ENCODE measurements at regions of chr1 and their contacts with region 1.

Region 1: GRCh38 chr1:7893529-7894180 is 40.8 kb upstream of the UTS2 start:
- DNase-seq: no peak
- ATAC-seq: no peak
- H3K4me3 ChIP-seq: no peak overlapping the region
- H3K27ac ChIP-seq: no peak overlapping the region
- H3K4me1 ChIP-seq: no peaks in the 10 kb centered on the region
- H3K27me3 ChIP-seq: no peaks in the 10 kb centered on the region
- CTCF ChIP-seq: no peak

Region 2: GRCh38 chr1:7827126-7827955 is 66.3 kb before region 1 on chr1:
- CTCF ChIA-PET with region 1: no interaction called
- POLR2A ChIA-PET with region 1: interaction called, 10 read pairs
- in situ Hi-C with region 1: no loop called
- intact Hi-C with region 1: no loop called
- DNase-seq: no peak
- ATAC-seq: no peak
- H3K4me3 ChIP-seq: no peak overlapping the region
- H3K27ac ChIP-seq: no peak overlapping the region
- H3K4me1 ChIP-seq: no peaks in the 10 kb centered on the region
- H3K27me3 ChIP-seq: no peaks in the 10 kb centered on the region
- CTCF ChIP-seq: no peak

Region 3: DNA sequence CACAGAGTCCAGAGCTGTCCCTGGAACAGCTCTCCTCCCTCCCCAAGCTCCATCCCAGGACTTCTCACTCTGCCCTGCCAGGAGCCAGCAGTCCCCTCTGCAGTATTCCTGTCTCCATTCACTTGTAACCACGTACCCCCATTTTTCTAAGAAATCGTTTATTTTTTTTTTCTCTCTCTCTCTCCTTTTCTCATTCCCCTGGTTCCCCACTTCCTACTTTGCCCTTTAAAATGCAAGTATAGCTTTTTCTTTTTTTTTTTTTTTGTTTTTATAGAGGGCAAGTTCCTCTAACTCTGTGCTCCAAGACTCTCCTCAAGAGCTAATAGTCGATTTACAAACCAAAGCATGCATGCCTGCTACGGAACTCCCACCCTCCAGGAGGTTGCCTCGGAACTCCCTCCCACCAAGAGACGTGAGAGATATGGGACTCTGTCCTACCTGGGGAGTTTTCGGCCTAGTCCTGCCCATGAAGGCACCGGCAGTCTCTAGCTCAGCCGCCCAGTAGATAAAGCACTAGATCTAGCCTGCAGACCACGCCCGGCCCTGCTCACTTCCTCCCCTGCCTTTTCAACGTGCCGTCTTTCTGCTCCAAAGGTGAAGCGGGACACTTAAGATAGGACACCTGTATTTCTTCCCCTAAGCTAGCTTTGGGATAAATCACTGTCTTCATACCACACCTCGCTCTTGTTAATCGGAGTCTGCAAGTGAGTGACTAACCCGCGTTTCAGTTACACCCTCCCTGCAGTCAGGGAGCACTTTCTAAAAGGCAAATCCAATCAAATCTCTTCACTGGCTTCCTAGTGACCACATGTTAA is 19.3 kb after region 1 on chr1:
- CTCF ChIA-PET with region 1: interaction called, 10 read pairs
- POLR2A ChIA-PET with region 1: no interaction called
- in situ Hi-C with region 1: no loop called
- intact Hi-C with region 1: no loop called
- DNase-seq: no peak
- ATAC-seq: peak; percentile 70; the same call in 1 of the 2 replicates
- H3K4me3 ChIP-seq: peak overlapping the region in 1 of 2 experiments; percentile 29; a peak in 3 of 4 replicates
- H3K27ac ChIP-seq: no peak overlapping the region
- H3K4me1 ChIP-seq: peaks cover 6% of the 10 kb centered on the region; the same call in 1 of the 2 replicates
- H3K27me3 ChIP-seq: no peaks in the 10 kb centered on the region
- CTCF ChIP-seq: no peak

Region 4: GRCh38 chr1:8343464-8344001 is 449.9 kb after region 1 on chr1:
- CTCF ChIA-PET with region 1: no interaction called
- POLR2A ChIA-PET with region 1: interaction called, 17 read pairs
- in situ Hi-C with region 1: no loop called
- intact Hi-C with region 1: no loop called
- DNase-seq: peak; percentile 81
- ATAC-seq: peak; percentile 84
- H3K4me3 ChIP-seq: peak overlapping the region in 1 of 2 experiments; percentile 24; a peak in 1 of 4 replicates
- H3K27ac ChIP-seq: peak overlapping the region; percentile 90
- H3K4me1 ChIP-seq: peaks cover 26% of the 10 kb centered on the region
- H3K27me3 ChIP-seq: no peaks in the 10 kb centered on the region
- CTCF ChIP-seq: no peak

Measured in Panc1 (cell line).